Cardiac septum (tissue), 1 donor: ENCODE measurements at regions of chr22 and their contacts with region 1.

Region 1: DNA sequence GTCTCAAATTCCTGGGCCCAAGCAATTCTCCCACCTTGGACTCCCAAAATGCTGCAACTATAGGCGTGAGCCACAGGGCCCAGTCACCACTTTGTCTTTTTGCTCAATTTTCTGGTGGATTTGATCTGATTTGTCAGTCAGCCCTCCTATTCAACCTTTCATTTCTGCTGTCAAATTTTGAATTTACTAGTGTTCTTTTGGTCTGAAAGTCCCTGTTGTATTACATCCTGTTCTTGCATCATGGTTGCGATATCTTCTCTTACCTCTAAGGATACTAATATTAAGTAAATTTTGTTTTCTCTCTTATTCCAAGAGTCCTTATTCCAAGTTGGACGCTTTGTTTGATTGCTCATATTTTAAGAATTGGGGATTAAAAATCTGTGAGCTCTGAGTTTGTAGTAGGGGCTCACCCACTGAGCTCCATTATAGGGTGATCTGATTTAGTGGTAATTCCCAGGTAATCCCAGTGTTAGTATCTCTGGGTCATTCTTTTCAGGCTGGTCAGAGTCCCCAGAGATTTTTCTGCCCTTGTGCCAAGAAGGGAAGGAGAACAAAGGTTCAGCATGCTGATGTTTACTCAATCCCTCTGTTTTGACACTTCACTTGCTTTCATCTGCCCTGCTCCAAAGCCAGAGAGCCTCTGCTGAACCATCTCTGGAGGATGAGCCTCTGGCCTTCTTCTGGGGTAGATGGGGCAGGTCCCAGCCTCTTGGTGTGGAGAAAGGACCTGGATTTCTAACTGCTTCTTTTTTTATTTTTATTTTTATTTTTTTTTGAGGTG is 10.0 kb downstream of the UPB1 start:
- DNase-seq: no peak

Region 2: GRCh38 chr22:24445481-24446259 is 59.5 kb before region 1 on chr22:
- intact Hi-C with region 1: no loop called
- DNase-seq: peak; percentile 63

Region 3: DNA sequence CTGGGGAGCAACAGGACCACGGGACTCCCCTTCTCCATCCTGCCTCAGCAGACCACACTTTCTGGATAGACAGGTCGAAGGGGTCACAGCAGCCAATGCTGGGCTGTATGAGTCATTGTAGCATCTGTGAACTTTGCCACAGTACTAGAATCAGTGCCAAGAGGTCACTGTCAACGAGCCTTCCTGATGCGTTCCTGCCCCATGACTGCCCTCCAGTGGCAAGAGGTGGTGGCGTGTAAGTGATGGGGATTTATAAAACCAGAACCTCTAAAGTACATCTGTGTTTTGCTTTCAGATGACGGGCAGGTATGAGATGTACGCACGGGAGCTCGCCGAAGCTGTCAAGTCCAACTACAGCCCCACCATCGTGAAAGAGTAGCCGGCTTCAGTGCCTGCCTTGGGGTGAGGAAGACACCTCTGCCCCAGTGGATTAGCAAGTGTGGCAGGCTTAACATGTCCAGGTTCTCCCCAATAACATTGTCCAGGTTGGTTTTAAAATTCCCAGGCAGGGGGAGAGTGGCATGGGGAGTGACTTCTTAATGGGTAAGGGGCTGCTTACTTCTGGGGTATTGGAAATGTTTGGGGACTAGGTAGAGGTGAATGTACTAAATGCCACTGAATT is 20.4 kb after region 1 on chr22:
- intact Hi-C with region 1: loop called (anchors 2 kb)
- DNase-seq: peak; percentile 90